Natural killer cell (primary cell): ENCODE measurements at regions of chr1 and their contacts with region 1.

Region 1: GRCh38 chr1:33045246-33045645 is 8.6 kb upstream of the AK2 start:
- DNase-seq: no peak
- ATAC-seq: peak in 1 of 3 donors; percentile 1
- H3K4me3 ChIP-seq: no peak overlapping the region
- H3K4me3 Mint-ChIP-seq: peak overlapping the region; percentile 71
- H3K27ac ChIP-seq: peak overlapping the region; percentile 46
- H3K27ac Mint-ChIP-seq: peak overlapping the region; percentile 82 to 87
- H3K4me1 ChIP-seq: peaks cover 19% of the 10 kb centered on the region
- H3K4me1 Mint-ChIP-seq: peaks cover 12 to 25% of the 10 kb centered on the region in 2 donors
- H3K27me3 ChIP-seq: no peaks in the 10 kb centered on the region
- H3K27me3 Mint-ChIP-seq: peaks cover 5% of the 10 kb centered on the region in 2 donors
- CTCF ChIP-seq: no peak

Region 2: GRCh38 chr1:32964461-32965250 is 80.6 kb before region 1 on chr1 and contains the start of gene RNF19B:
- intact Hi-C with region 1: loop called (anchors 2 kb)
- DNase-seq: peak; percentile 90 to 96
- ATAC-seq: peak; percentile 90 to 98 (median 92)
- H3K4me3 ChIP-seq: peak within 1 kb of the TSS; percentile 67
- H3K4me3 Mint-ChIP-seq: peak within 1 kb of the TSS; percentile 92
- H3K27ac ChIP-seq: peak within 1 kb of the TSS; percentile 80
- H3K27ac Mint-ChIP-seq: peak within 1 kb of the TSS; percentile 90 to 91
- H3K4me1 ChIP-seq: peaks cover 18% of the 10 kb centered on the region
- H3K4me1 Mint-ChIP-seq: peaks cover 36 to 40% of the 10 kb centered on the region in 2 donors
- H3K27me3 ChIP-seq: no peaks in the 10 kb centered on the region
- H3K27me3 Mint-ChIP-seq: peaks cover 0 to 10% of the 10 kb centered on the region in 2 donors
- CTCF ChIP-seq: no peak
- total RNA-seq, gene RNF19B: 44.2 to 110 (median 54.3) TPM

Region 3: DNA sequence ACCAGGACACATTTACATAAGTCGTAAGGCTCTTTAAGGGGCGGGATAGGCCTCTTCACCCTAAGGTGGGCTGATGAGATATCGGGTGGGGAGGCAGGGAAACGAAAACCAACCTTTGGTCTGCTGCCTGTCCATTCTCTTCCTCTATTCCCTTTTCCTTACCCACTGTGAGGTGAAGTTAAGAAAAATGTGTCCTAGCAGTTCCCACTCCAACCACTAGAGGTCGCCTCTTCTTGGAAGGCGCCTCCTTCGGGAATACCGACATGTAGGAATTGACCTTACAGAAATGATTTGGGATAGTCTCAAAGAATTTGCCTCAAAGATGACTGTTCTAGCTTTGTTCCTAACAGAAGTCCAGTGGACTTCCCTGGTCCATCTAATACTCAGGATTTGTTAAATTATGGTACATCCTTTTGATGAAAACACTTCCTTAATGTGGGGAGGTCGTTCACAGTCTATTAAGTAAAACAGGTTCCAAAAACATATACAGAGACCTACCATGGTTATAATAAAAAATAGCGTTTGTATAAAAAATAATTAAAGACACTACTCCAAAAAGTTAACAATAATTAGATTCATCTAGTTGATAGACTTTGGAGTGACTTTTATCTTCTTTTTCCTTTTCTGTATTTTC is 49.8 kb after region 1 on chr1:
- intact Hi-C with region 1: loop called (anchors 5 kb)
- DNase-seq: peak in 1 of 2 donors; percentile 59
- ATAC-seq: no peak
- H3K4me3 ChIP-seq: no peak overlapping the region
- H3K4me3 Mint-ChIP-seq: no peak overlapping the region
- H3K27ac ChIP-seq: no peak overlapping the region
- H3K27ac Mint-ChIP-seq: no peak overlapping the region
- H3K4me1 ChIP-seq: peaks cover 34% of the 10 kb centered on the region
- H3K4me1 Mint-ChIP-seq: peaks cover 44 to 55% of the 10 kb centered on the region in 2 donors
- H3K27me3 ChIP-seq: no peaks in the 10 kb centered on the region
- H3K27me3 Mint-ChIP-seq: no peaks in the 10 kb centered on the region
- CTCF ChIP-seq: peak; percentile 98

Region 4: GRCh38 chr1:33127001-33127791 is 82.0 kb after region 1 on chr1:
- intact Hi-C with region 1: loop called (anchors 5 kb)
- DNase-seq: peak; percentile 97 to 100
- ATAC-seq: peak; percentile 86 to 98 (median 89)
- H3K4me3 ChIP-seq: peak overlapping the region; percentile 71
- H3K4me3 Mint-ChIP-seq: peak overlapping the region; percentile 96
- H3K27ac ChIP-seq: peak overlapping the region; percentile 87
- H3K27ac Mint-ChIP-seq: peak overlapping the region; percentile 95 to 97
- H3K4me1 ChIP-seq: peaks cover 34% of the 10 kb centered on the region
- H3K4me1 Mint-ChIP-seq: peaks cover 32 to 55% of the 10 kb centered on the region in 2 donors
- H3K27me3 ChIP-seq: no peaks in the 10 kb centered on the region
- H3K27me3 Mint-ChIP-seq: peaks cover 0 to 1% of the 10 kb centered on the region in 2 donors
- CTCF ChIP-seq: peak; percentile 91